Ovary (tissue), 10 donors: ENCODE measurements at regions of chr18 and their contacts with region 1.

Region 1: DNA sequence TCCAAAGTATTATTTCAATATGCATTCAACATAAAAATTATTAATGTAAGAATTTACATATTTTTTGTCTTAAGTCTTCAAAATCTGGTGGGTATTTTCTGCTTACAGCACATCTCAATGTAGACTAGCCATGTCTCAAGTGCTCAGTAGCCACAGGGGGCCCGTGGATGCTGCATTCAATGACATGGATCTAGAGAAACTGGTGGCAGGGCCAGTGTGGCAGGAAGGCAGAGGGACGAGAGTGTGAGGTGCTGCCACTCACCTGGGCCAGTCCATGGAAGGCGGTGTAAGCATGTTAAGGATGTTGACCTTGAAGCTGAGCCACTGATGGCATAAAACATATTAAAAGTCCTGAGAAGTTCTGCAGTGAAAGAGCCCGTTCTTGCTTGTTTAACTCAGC is 6.2 kb upstream of the LIPG start:
- DNase-seq: no peak
- H3K4me3 ChIP-seq: no peak overlapping the region
- H3K27ac ChIP-seq: no peak overlapping the region
- H3K4me1 ChIP-seq: no peaks in the 10 kb centered on the region
- H3K27me3 ChIP-seq: no peaks in the 10 kb centered on the region
- CTCF ChIP-seq: no peak
- EP300 ChIP-seq: no peak
- POLR2A ChIP-seq: no peak

Region 2: DNA sequence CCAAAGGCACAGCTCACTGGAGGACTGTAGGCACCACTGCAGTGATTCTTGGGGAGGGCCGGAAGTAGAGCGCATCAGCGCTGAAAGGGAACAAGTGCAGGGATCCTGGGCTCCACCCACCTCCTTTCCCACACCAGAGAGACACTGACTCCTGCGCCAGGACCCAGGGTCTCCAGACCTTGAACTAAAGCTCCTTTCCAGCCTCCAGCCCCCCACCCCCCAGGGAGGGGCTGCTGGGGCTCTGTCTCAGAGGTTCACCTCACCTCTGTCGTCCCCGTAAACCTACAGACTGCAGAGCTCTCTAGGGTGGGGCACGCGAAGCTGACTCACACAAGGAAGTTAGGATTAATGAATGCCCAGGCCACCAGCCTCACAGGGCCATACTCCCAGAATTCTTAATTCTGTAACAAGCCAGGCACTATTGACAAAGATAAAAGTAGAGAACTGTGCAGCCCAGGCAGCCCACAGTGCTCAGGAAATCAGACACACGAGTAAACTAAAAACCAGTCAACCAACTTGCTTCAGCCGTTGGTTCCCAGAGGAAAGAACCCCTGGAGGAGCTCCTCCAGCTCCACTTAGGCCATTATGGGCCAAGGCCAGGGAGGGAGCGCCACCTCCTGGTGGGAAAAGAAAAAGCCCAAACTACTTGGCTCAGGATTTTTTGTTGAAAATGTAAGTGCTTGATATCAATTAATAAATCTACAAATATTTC is 302.8 kb after region 1 on chr18:
- intact Hi-C with region 1: loop called in 1 of 4 experiments (anchors 5 kb)
- DNase-seq: peak; percentile 32 to 76 (median 61)
- H3K4me3 ChIP-seq: no peak overlapping the region
- H3K27ac ChIP-seq: no peak overlapping the region
- H3K4me1 ChIP-seq: no peaks in the 10 kb centered on the region
- H3K27me3 ChIP-seq: no peaks in the 10 kb centered on the region
- CTCF ChIP-seq: peak; percentile 61 to 68 (median 63)
- EP300 ChIP-seq: no peak
- POLR2A ChIP-seq: no peak